Right cardiac atrium (tissue), 5 donors: ENCODE measurements at regions of chr13 and their contacts with region 1.

Region 1: DNA sequence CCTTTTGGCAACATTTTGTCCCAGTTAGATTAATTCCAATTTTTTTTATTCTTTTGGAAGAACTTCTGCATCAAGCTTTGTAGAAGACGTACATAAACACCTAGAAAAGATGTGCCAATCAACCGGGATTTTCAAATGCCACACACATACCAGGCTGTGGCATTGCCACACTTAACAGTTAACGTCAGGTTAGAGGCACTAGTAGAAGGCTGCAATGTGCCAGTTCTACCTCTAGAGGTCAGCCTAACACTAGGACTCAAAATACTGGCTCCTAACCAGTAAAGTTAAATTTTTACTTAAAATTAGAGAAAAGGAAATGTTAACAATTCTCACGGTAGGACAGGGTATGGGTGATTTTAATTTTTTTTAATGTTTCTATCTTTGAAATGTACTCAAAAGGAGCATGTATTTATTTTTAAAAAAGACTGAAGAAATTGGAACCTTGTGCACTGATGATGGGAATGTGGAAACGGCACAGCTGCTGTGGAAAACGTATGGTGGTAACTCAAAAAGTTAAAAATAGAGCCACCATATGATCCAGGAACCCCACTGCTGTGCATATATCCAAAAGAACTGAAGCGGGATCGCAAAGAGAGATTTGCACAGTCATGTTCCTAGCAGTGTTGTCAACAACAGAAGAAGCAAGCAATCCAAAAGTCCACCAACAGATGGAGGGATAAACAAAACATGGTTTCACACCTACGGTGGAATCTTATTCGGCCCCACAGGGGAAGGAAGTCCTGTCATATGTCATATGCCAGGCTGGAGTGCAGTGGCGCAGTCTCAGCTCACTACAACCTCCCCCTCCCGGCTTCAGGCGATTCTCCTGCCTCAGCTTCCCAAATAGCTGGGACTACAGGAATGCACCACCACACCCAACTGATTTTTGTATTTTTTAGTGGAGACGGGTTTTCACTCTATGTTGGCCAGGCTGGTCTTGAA is 30.3 kb downstream of the CRYL1 start:
- DNase-seq: peak in 1 of 3 donors; percentile 24
- ATAC-seq: peak; percentile 75 to 83
- H3K4me3 ChIP-seq: peak overlapping the region; percentile 29
- H3K27ac ChIP-seq: no peak overlapping the region
- H3K4me1 ChIP-seq: peaks cover 3% of the 10 kb centered on the region
- H3K27me3 ChIP-seq: no peaks in the 10 kb centered on the region

Region 2: GRCh38 chr13:20192158-20192835 is 303.1 kb before region 1 on chr13:
- intact Hi-C with region 1: loop called in 1 of 4 experiments (anchors 5 kb)
- DNase-seq: peak in 2 of 3 donors; percentile 40 to 59
- ATAC-seq: peak in 1 of 2 donors; percentile 26
- H3K4me3 ChIP-seq: peak overlapping the region; percentile 89
- H3K27ac ChIP-seq: no peak overlapping the region
- H3K4me1 ChIP-seq: no peaks in the 10 kb centered on the region
- H3K27me3 ChIP-seq: no peaks in the 10 kb centered on the region

Region 3: DNA sequence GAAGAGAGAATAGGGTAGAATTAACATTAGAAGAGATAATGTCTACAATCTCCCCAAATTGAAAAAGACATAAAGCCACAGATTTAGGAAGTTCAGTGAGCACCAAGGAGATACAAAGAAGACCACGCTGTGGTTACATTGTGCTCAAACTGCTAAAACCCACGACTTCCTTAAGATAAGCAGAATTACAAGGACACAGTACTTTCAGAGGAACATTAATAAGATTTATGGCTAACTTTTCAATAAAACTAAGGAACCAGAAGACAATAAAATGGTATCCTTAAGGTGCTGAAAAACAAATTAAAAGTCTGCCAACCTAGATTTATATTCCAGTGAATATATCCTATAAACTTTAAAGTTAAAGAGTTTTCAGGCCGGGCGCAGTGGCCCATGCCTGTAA is 200.7 kb after region 1 on chr13:
- intact Hi-C with region 1: loop called in 2 of 4 experiments (anchors 10 kb)
- DNase-seq: no peak
- ATAC-seq: no peak
- H3K4me3 ChIP-seq: no peak overlapping the region
- H3K27ac ChIP-seq: no peak overlapping the region
- H3K4me1 ChIP-seq: no peaks in the 10 kb centered on the region
- H3K27me3 ChIP-seq: no peaks in the 10 kb centered on the region

Region 4: DNA sequence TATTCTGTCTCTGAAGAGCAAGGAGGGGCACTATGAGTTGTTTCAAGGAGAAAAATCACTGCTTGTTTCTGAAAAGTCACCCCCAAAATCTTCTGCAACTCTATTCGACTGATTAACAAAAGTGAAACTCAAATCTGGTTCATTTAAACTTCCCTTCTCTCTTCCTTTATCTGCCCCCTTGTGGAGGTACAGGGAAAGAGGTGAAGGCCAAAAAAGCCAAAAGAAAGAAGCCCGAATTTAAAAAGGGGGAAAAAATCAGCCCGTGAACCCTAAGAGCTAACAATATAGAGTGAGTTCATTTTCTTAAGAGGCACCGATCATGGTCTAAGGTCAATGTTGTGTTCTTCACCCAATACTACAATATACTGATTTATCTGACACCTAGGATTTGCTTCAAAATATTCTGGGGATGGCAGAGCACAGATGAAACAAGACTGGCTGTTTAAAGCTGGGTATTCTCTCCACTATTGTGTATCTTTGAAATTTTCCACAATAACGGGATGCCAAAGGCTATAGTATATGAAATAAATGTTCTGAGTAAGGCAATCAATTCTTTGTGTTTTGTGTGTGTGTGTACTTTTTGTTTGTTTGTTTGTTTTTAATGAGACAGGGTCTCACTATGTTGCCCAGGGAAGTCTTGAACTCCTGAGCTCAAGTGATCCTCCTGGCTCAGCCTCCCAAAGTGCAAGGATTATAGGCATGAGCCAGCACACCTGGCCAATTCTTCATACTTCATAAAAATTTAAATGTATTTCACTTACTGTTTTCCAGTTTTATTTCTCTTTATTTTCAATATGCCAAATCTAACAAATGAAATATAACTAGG is 333.4 kb after region 1 on chr13:
- intact Hi-C with region 1: loop called in 1 of 4 experiments (anchors 10 kb)
- DNase-seq: no peak
- ATAC-seq: peak; percentile 31 to 39
- H3K4me3 ChIP-seq: peak overlapping the region; percentile 29
- H3K27ac ChIP-seq: no peak overlapping the region
- H3K4me1 ChIP-seq: peaks cover 2% of the 10 kb centered on the region
- H3K27me3 ChIP-seq: no peaks in the 10 kb centered on the region

Region 5: GRCh38 chr13:20924758-20925394 is 429.5 kb after region 1 on chr13:
- intact Hi-C with region 1: loop called (anchors 5 to 10 kb)
- DNase-seq: peak; percentile 76 to 88 (median 78)
- ATAC-seq: peak in 1 of 2 donors; percentile 57
- H3K4me3 ChIP-seq: no peak overlapping the region
- H3K27ac ChIP-seq: no peak overlapping the region
- H3K4me1 ChIP-seq: no peaks in the 10 kb centered on the region
- H3K27me3 ChIP-seq: no peaks in the 10 kb centered on the region